ENCODE measurements at regions of chr16 and their contacts with region 1.

Region 1: DNA sequence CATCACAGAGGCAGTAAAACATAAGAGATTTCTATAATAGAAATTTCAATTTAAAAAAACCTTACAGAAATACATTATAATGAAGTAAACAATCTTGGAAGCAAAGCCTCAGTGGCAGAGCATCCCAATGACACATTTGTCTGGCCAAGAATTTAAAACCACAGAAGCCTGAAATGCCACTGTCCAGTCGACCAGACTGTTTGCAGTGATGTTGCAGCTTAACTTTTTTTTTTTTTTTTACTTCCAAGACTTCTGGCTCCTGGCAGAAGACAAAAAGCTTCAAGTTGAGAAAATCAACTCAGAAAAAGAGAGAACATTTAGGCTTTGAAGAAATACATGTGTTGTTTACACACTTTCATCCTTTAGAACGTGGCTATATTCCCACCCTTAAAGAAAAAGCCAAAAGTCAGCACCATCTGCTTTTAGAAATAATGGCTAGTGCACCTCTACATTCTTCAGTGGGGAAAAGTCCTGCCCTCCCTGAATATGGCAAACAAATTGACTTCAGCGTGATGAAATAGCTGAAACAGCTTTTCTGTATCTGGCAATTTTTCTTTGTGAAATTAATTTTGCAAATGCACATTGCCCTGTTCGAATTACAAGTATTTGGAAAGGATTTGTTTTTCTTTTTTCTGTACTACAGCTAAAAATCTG is 205.5 kb upstream of the MON1B start:
- DNase-seq: no peak
- ATAC-seq: no peak
- H3K4me3 ChIP-seq: no peak overlapping the region
- H3K27ac ChIP-seq: no peak overlapping the region
- H3K4me1 ChIP-seq: no peaks in the 10 kb centered on the region
- H3K27me3 ChIP-seq: no peaks in the 10 kb centered on the region
- CTCF ChIP-seq: no peak

Region 2: DNA sequence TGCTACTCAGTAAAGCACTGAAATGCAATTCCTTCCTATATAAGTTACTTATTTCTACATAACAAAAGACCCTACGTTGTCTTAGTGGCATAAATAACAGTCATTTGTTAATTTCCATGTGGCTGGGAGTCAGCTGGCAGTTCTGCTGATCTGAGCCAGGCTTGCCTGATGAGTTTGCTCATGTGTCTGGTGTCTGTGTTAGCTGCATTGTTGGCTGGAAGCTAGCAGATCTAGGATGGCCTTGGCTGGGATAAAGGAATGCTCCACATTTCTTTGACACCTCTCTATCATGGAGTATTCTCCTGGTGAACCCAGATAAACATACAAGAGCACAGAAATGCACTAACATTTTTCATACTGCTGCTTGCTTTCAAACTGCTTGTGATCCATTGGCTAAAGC is 58.9 kb before region 1 on chr16:
- intact Hi-C with region 1: loop called in 1 of 10 experiments (anchors 10 kb)
- DNase-seq: peak in 1 of 2 donors; percentile 4
- ATAC-seq: peak in 4 of 8 donors; percentile 48 to 73 (median 62)
- H3K4me3 ChIP-seq: no peak overlapping the region
- H3K27ac ChIP-seq: no peak overlapping the region
- H3K4me1 ChIP-seq: no peaks in the 10 kb centered on the region
- H3K27me3 ChIP-seq: no peaks in the 10 kb centered on the region
- CTCF ChIP-seq: no peak

Region 3: DNA sequence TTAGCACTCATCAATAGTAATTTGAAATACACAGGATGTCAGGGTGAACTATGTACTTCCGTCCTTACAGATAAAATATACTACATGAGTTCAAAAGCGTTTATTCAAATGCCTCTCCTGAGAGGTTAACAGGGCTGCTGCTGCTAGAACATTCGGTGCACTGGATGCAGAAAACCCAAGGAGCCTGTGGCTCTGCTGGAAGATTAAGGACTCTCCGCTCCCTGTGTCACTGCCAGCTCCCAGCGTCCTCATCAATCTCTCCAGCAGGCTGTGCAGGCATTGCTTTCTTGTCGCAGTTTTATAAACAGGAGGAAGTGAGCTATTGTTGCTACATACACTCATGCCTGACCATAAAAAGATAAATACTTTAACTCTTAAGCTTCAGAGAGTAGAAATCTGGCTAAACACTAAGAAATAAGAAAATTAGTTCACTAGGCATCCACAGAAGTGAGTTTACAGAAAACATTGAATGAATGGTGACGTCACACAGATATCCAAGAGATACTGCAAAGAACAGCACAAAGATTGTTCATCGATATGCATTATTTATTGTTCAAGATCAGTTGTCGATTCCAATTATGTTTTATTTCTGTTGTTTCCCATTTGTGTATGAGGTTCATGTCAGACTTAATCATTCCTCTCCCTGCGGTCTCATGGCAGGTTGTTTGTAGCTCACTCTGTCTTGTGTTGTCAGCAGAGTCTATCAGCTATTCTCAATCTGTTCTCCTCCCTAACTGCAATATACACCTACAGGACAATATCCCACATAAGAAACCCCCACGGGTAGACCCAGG is 77.6 kb after region 1 on chr16:
- intact Hi-C with region 1: loop called in 1 of 10 experiments (anchors 2 kb)
- DNase-seq: no peak
- ATAC-seq: peak in 7 of 8 donors; percentile 21 to 72 (median 52)
- H3K4me3 ChIP-seq: no peak overlapping the region
- H3K27ac ChIP-seq: peak overlapping the region in 3 of 10 donors; percentile 2 to 23 (median 19)
- H3K4me1 ChIP-seq: peaks cover 0 to 52% (median 20%) of the 10 kb centered on the region in 9 donors
- H3K27me3 ChIP-seq: no peaks in the 10 kb centered on the region
- CTCF ChIP-seq: peak in 2 of 9 donors; percentile 13 to 31

Measured in heart right ventricle (tissue), 16 donors.